ENCODE measurements at regions of chr6 and their contacts with region 1.

Region 1: GRCh38 chr6:31541658-31542521 is at the start of gene DDX39B:
- DNase-seq: peak; percentile 92 to 99 (median 95)
- ATAC-seq: peak; percentile 86
- H3K4me3 ChIP-seq: peak within 1 kb of the TSS; percentile 76
- H3K27ac ChIP-seq: peak within 1 kb of the TSS; percentile 98
- H3K4me1 ChIP-seq: peaks cover 10 to 24% of the 10 kb centered on the region in 2 experiments; a peak in 4 of 5 replicates
- H3K27me3 ChIP-seq: no peaks in the 10 kb centered on the region
- CTCF ChIP-seq: no peak
- EP300 ChIP-seq: peak; percentile 35; the same call in 1 of the 2 replicates
- POLR2A ChIP-seq: peak; percentile 99
- RAD21 ChIP-seq: no peak
- polyA plus RNA-seq, gene DDX39B: 479 to 565 TPM

Region 2: GRCh38 chr6:31351401-31352309 is 190.2 kb before region 1 on chr6:
- CTCF ChIA-PET with region 1: no interaction called
- POLR2A ChIA-PET with region 1: no interaction called
- in situ Hi-C with region 1: no loop called
- intact Hi-C with region 1: no loop called
- DNase-seq: no peak
- ATAC-seq: no peak
- H3K4me3 ChIP-seq: no peak overlapping the region
- H3K27ac ChIP-seq: no peak overlapping the region
- H3K4me1 ChIP-seq: peaks cover 0 to 8% of the 10 kb centered on the region in 2 experiments; a peak in 2 of 5 replicates
- H3K27me3 ChIP-seq: peaks cover 24 to 41% of the 10 kb centered on the region in 2 experiments
- CTCF ChIP-seq: no peak
- EP300 ChIP-seq: no peak
- POLR2A ChIP-seq: no peak
- RAD21 ChIP-seq: no peak

Region 3: DNA sequence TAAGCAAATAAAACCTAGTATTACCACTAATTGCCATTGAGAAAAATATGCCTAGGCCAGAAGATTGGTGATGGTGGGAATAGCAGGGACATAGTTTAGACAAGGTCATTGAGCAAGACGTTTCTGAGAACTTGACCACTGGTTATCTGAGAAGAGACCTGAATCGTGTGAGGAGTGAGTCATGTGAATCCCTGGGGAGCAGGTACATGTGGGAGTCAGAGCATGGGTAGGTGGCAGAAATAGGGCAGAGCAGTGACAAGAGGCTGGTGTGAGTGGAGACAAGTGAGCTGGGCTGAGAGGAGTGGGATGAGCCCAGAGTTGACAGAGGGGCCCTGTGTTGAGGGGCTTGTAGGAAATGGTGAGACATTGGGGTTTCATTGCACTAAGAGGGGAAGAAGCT is 122.0 kb before region 1 on chr6:
- CTCF ChIA-PET with region 1: no interaction called
- POLR2A ChIA-PET with region 1: no interaction called
- in situ Hi-C with region 1: no loop called
- intact Hi-C with region 1: no loop called
- DNase-seq: peak in 1 of 4 experiments; percentile 28
- ATAC-seq: no peak
- H3K4me3 ChIP-seq: no peak overlapping the region
- H3K27ac ChIP-seq: no peak overlapping the region
- H3K4me1 ChIP-seq: peaks cover 0 to 5% of the 10 kb centered on the region in 2 experiments; a peak in 3 of 5 replicates
- H3K27me3 ChIP-seq: peaks cover 0 to 14% of the 10 kb centered on the region in 2 experiments; a peak in 2 of 5 replicates
- CTCF ChIP-seq: no peak
- EP300 ChIP-seq: no peak
- POLR2A ChIP-seq: no peak
- RAD21 ChIP-seq: no peak

Region 4: GRCh38 chr6:31493875-31494694 is 47.8 kb before region 1 on chr6:
- CTCF ChIA-PET with region 1: interaction called, 5 read pairs
- POLR2A ChIA-PET with region 1: interaction called, 23 read pairs
- in situ Hi-C with region 1: no loop called
- intact Hi-C with region 1: loop called (anchors 1 kb)
- DNase-seq: peak; percentile 73 to 97 (median 80)
- ATAC-seq: peak; percentile 81
- H3K4me3 ChIP-seq: peak overlapping the region; percentile 54
- H3K27ac ChIP-seq: peak overlapping the region; percentile 69
- H3K4me1 ChIP-seq: peaks cover 42 to 53% of the 10 kb centered on the region in 2 experiments
- H3K27me3 ChIP-seq: no peaks in the 10 kb centered on the region
- CTCF ChIP-seq: peak; percentile 97 to 100 (median 99)
- EP300 ChIP-seq: peak; percentile 35; the same call in 1 of the 2 replicates
- POLR2A ChIP-seq: peak; percentile 59
- RAD21 ChIP-seq: peak; percentile 80 to 95

Region 5: DNA sequence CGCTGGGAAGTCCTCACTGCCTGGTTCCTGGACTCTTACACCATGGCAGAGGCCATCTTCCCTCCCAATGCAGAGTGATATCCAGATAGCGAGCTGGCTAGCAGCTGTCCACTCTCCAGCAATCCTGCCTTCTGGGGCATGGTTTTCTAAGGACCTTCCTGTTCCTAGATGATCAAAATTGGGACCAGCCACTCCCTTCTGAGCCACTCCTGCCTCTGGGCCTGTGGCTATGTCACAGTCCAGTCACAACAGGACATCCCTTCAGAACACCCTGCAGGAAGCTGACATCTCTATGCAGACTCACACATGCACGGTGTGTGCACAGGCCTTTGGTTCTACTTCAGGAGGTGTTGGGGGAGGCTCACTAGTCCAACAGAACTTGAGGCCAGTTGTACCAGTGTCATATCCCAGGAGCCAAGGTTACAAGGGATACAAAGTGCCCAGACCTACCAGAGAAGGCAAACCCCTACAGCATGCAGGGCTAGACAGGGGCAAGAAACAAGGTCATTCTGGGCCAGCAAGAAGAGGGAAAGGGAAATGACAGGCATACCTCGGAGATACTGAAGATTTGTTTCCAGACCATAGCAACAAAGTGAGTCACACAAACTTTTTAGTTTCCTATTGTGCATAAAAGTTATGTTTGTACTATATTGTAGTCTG is 15.8 kb before region 1 on chr6:
- CTCF ChIA-PET with region 1: no interaction called
- POLR2A ChIA-PET with region 1: interaction called, 107 read pairs
- in situ Hi-C with region 1: no loop called
- intact Hi-C with region 1: no loop called
- DNase-seq: peak in 3 of 4 experiments; percentile 45 to 62 (median 56)
- ATAC-seq: peak; percentile 38
- H3K4me3 ChIP-seq: no peak overlapping the region
- H3K27ac ChIP-seq: peak overlapping the region; percentile 66; the same call in 2 of the 3 replicates
- H3K4me1 ChIP-seq: peaks cover 10 to 20% of the 10 kb centered on the region in 2 experiments
- H3K27me3 ChIP-seq: no peaks in the 10 kb centered on the region
- CTCF ChIP-seq: no peak
- EP300 ChIP-seq: no peak
- POLR2A ChIP-seq: no peak
- RAD21 ChIP-seq: no peak

Region 6: DNA sequence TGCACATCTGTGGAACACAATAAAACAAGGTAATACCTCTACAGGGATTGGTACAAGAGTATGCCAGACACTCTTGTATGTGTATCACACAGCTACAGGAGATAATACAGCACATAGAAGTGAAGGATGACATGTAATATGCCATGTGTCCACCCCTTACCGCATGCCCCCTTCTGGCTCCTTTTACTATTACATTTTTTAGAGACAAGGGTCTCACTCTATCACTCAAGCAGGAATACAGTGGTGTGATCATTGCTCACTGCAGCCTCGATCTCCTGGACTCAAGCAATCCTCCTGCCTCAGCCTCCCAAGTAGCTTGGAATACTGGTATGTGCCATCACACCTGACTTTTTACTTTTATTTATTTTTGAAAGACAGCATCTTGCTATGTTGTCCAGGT is 55.1 kb after region 1 on chr6:
- CTCF ChIA-PET with region 1: interaction called, 78 read pairs
- POLR2A ChIA-PET with region 1: interaction called, 27 read pairs
- in situ Hi-C with region 1: loop called (anchors 5 kb)
- intact Hi-C with region 1: loop called (anchors 1 kb)
- DNase-seq: peak; percentile 72 to 76 (median 74)
- ATAC-seq: peak; percentile 86
- H3K4me3 ChIP-seq: no peak overlapping the region
- H3K27ac ChIP-seq: no peak overlapping the region
- H3K4me1 ChIP-seq: peaks cover 7 to 16% of the 10 kb centered on the region in 2 experiments; a peak in 3 of 5 replicates
- H3K27me3 ChIP-seq: no peaks in the 10 kb centered on the region
- CTCF ChIP-seq: peak; percentile 68 to 81 (median 71)
- EP300 ChIP-seq: no peak
- POLR2A ChIP-seq: no peak
- RAD21 ChIP-seq: peak; percentile 69 to 85

Region 7: GRCh38 chr6:31776989-31777666 is 235.2 kb after region 1 on chr6 and contains the start of gene VWA7:
- CTCF ChIA-PET with region 1: interaction called, 3 read pairs
- POLR2A ChIA-PET with region 1: no interaction called
- in situ Hi-C with region 1: no loop called
- intact Hi-C with region 1: loop called (anchors 10 kb)
- DNase-seq: peak; percentile 98 to 99 (median 99)
- ATAC-seq: peak; percentile 91
- H3K4me3 ChIP-seq: peak within 1 kb of the TSS; percentile 10; the same call in 1 of the 2 replicates
- H3K27ac ChIP-seq: peak within 1 kb of the TSS; percentile 87
- H3K4me1 ChIP-seq: peaks cover 43 to 85% of the 10 kb centered on the region in 2 experiments
- H3K27me3 ChIP-seq: no peaks in the 10 kb centered on the region
- CTCF ChIP-seq: peak; percentile 14 to 44 (median 24); a peak in 2 of 6 replicates
- EP300 ChIP-seq: peak; percentile 88
- POLR2A ChIP-seq: peak; percentile 84; the same call in 1 of the 2 replicates
- RAD21 ChIP-seq: peak; percentile 46 to 80
- polyA plus RNA-seq, gene VWA7: 0.18 to 0.32 TPM

Region 8: GRCh38 chr6:31870385-31870921 is 328.6 kb after region 1 on chr6:
- CTCF ChIA-PET with region 1: no interaction called
- POLR2A ChIA-PET with region 1: no interaction called
- in situ Hi-C with region 1: no loop called
- intact Hi-C with region 1: no loop called
- DNase-seq: peak in 3 of 4 experiments; percentile 45 to 74 (median 64)
- ATAC-seq: peak; percentile 60
- H3K4me3 ChIP-seq: no peak overlapping the region
- H3K27ac ChIP-seq: no peak overlapping the region
- H3K4me1 ChIP-seq: peaks cover 2 to 23% of the 10 kb centered on the region in 2 experiments; a peak in 3 of 5 replicates
- H3K27me3 ChIP-seq: peaks cover 0 to 4% of the 10 kb centered on the region in 2 experiments; a peak in 2 of 5 replicates
- CTCF ChIP-seq: peak; percentile 21 to 53 (median 41); a peak in 5 of 6 replicates
- EP300 ChIP-seq: no peak
- POLR2A ChIP-seq: no peak
- RAD21 ChIP-seq: no peak